ENCODE measurements at regions of chr3 and their contacts with region 1.

Region 1: GRCh38 chr3:8996681-8997121 is 33.4 kb upstream of the RAD18 start:
- DNase-seq: peak; percentile 42 to 74
- ATAC-seq: peak; percentile 72 to 94 (median 87)
- H3K4me3 ChIP-seq: no peak overlapping the region
- H3K27ac ChIP-seq: peak overlapping the region in 5 of 10 donors; percentile 45 to 78 (median 65)
- H3K4me1 ChIP-seq: peaks cover 0 to 19% (median 5%) of the 10 kb centered on the region in 9 donors
- H3K27me3 ChIP-seq: no peaks in the 10 kb centered on the region
- CTCF ChIP-seq: peak in 8 of 9 donors; percentile 8 to 54 (median 40)

Region 2: GRCh38 chr3:9061634-9062033 is 64.9 kb after region 1 on chr3:
- intact Hi-C with region 1: loop called in 1 of 10 experiments (anchors 2 kb)
- DNase-seq: no peak
- ATAC-seq: no peak
- H3K4me3 ChIP-seq: no peak overlapping the region
- H3K27ac ChIP-seq: no peak overlapping the region
- H3K4me1 ChIP-seq: peaks cover 0 to 17% (median 11%) of the 10 kb centered on the region in 9 donors
- H3K27me3 ChIP-seq: no peaks in the 10 kb centered on the region
- CTCF ChIP-seq: no peak

Measured in heart right ventricle (tissue), 16 donors.